ENCODE measurements at regions of chr5 and their contacts with region 1.

Region 1: DNA sequence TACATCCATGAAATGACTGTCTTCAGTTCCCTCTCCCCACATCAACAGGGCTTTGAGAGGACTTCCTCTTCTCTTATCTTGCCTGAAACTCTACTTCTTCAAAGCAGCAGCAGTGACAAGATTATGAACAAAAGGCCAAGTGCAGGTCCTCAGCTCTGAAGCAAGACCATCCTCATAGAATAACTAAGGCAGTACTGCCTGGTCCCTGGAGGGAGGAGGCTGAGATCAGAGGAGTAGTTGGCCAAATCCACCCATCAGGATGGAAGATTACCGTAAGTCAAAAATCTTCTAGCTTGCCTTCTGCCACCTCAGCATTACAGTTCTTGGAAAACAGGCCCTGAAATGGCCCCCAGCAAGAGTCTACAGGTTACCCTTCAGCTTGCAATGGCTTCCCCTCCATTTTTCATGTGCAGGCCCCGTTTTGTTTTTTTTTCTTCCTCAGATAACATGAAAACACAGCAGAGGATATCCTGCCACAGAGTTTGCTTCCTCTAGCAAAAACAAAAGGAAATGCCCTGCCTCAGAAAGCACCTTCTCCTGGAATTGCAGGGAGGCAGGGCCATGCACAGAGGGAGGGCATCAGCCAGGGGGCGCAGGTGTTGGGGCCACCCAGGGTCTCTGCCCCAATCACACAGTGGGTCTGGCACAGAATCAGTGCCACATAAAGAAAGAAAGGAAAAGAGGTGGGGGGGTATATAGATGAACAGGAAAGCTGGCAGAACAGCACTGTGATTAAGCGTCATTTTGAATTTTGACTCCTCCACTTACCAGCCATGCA is 40.0 kb downstream of the KLHL3 start:
- DNase-seq: peak in 8 of 9 experiments; percentile 13 to 72 (median 22)
- ATAC-seq: peak; percentile 76
- H3K4me3 ChIP-seq: no peak overlapping the region
- H3K4me3 Mint-ChIP-seq: peak overlapping the region; percentile 68
- H3K27ac ChIP-seq: peak overlapping the region; percentile 32 to 66
- H3K27ac Mint-ChIP-seq: peak overlapping the region; percentile 95
- H3K4me1 ChIP-seq: peaks cover 41% of the 10 kb centered on the region
- H3K4me1 Mint-ChIP-seq: peaks cover 55% of the 10 kb centered on the region
- H3K27me3 ChIP-seq: no peaks in the 10 kb centered on the region
- H3K27me3 Mint-ChIP-seq: no peaks in the 10 kb centered on the region
- CTCF ChIP-seq: peak; percentile 23

Region 2: DNA sequence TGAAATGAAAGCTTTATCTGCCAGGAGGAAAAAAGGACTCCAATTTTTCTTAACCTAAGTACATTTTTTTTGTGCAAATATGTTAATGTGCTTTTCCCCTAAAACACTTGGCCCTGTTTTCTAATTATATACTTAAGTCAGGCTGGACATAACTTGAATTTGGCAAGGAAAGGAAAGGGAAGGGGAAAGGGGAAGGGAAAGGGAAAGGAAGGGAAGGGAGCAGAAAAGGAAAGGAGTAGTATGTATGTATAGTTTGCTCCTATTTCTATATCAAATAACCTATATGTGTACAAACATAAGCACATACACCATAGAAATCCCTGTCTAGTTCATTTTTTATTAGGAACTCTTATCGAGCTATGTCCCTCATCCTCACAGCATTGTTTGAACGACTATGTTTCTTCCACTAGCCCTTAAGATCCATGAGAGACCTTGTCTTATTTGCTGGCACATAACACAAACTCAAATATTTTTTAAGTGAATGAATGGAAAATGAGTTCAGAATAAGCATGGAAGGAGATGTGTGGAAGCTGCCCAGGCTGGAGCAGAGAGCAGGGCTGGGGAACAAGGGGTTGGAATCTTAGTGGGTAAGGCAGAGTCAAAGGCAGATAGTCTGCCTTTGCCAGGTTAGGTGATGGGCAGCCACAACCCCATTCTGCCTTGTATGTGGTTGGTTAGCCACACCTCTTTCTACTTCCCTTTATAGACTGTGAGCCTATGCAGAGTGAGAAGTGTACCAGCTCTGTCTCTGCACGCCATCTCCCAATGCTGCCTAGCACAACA is 30.0 kb before region 1 on chr5:
- CTCF ChIA-PET with region 1: interaction called, 38 read pairs
- POLR2A ChIA-PET with region 1: interaction called, 12 read pairs
- intact Hi-C with region 1: loop called in 1 of 2 experiments (anchors 2 kb)
- DNase-seq: peak in 8 of 9 experiments; percentile 16 to 69 (median 44)
- ATAC-seq: peak; percentile 100
- H3K4me3 ChIP-seq: no peak overlapping the region
- H3K4me3 Mint-ChIP-seq: no peak overlapping the region
- H3K27ac ChIP-seq: no peak overlapping the region
- H3K27ac Mint-ChIP-seq: peak overlapping the region; percentile 11
- H3K4me1 ChIP-seq: peaks cover 12% of the 10 kb centered on the region
- H3K4me1 Mint-ChIP-seq: peaks cover 16% of the 10 kb centered on the region
- H3K27me3 ChIP-seq: no peaks in the 10 kb centered on the region
- H3K27me3 Mint-ChIP-seq: no peaks in the 10 kb centered on the region
- CTCF ChIP-seq: no peak

Region 3: GRCh38 chr5:137712139-137712667 is 16.4 kb after region 1 on chr5:
- CTCF ChIA-PET with region 1: no interaction called
- POLR2A ChIA-PET with region 1: no interaction called
- intact Hi-C with region 1: no loop called
- DNase-seq: no peak
- ATAC-seq: no peak
- H3K4me3 ChIP-seq: no peak overlapping the region
- H3K4me3 Mint-ChIP-seq: no peak overlapping the region
- H3K27ac ChIP-seq: no peak overlapping the region
- H3K27ac Mint-ChIP-seq: no peak overlapping the region
- H3K4me1 ChIP-seq: no peaks in the 10 kb centered on the region
- H3K4me1 Mint-ChIP-seq: peaks cover 5% of the 10 kb centered on the region
- H3K27me3 ChIP-seq: no peaks in the 10 kb centered on the region
- H3K27me3 Mint-ChIP-seq: no peaks in the 10 kb centered on the region
- CTCF ChIP-seq: no peak

Region 4: GRCh38 chr5:137735555-137736284 is 39.9 kb after region 1 on chr5 and contains the start of gene KLHL3:
- CTCF ChIA-PET with region 1: interaction called, 83 read pairs
- POLR2A ChIA-PET with region 1: interaction called, 22 read pairs
- intact Hi-C with region 1: loop called (anchors 1 to 5 kb)
- DNase-seq: peak in 7 of 9 experiments; percentile 24 to 68 (median 48)
- ATAC-seq: peak; percentile 37
- H3K4me3 ChIP-seq: peak within 1 kb of the TSS; percentile 69 to 83
- H3K4me3 Mint-ChIP-seq: no peak within 1 kb of the TSS
- H3K27ac ChIP-seq: peak within 1 kb of the TSS; percentile 41 to 45
- H3K27ac Mint-ChIP-seq: no peak within 1 kb of the TSS
- H3K4me1 ChIP-seq: peaks cover 61% of the 10 kb centered on the region
- H3K4me1 Mint-ChIP-seq: peaks cover 23% of the 10 kb centered on the region
- H3K27me3 ChIP-seq: no peaks in the 10 kb centered on the region
- H3K27me3 Mint-ChIP-seq: no peaks in the 10 kb centered on the region
- CTCF ChIP-seq: no peak
- total RNA-seq, gene KLHL3: 16.9 to 17.4 TPM

Measured in CD8-positive, alpha-beta T cell (primary cell).